ENCODE measurements at regions of chr13 and their contacts with region 1.

Region 1: GRCh38 chr13:24220086-24220703 is 59.7 kb downstream of the SPATA13 start:
- DNase-seq: peak; percentile 49
- H3K4me3 ChIP-seq: no peak overlapping the region
- CTCF ChIP-seq: peak; percentile 63

Region 2: GRCh38 chr13:24005755-24006281 is 214.4 kb before region 1 on chr13:
- CTCF ChIA-PET with region 1: interaction called, 14 read pairs
- POLR2A ChIA-PET with region 1: no interaction called
- DNase-seq: no peak
- H3K4me3 ChIP-seq: no peak overlapping the region
- CTCF ChIP-seq: no peak

Region 3: DNA sequence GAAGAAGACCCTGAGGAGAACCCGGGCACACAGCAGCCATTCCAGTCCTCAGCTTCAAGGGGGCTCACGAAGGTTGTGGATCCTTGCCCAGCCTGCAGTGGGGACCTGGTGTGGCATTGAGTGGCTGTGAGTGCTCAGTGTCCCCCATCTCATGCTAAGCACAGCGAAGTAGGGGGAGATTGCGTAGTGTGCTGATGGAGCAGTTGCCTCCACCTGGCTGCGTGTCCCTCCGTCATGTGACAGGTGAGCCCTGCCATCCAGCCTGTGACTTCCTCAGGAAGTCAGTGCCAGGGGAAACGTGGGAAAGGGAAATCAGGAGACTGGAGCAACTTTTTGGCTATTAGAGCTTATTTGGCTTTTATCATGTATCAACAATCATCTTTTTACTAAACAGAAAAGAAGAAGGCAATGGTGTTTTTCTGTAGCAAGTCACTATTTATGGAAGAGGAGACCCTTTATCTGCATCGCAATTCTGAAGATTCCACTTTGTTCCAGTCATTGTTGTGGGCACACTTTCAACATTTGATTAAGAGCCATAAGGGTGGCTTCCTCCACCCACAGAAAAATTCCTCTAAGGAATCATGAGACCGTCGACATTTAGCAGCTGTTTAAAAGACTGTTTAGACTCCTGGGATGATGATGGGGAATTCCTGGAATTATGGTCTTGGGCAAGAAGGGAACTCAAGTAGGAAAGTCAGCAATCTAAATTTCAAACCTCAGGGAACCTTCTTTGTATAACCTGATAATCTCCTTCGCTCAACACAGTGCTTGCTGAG is 186.5 kb before region 1 on chr13:
- CTCF ChIA-PET with region 1: interaction called, 17 read pairs
- POLR2A ChIA-PET with region 1: interaction called, 4 read pairs
- DNase-seq: peak; percentile 72
- H3K4me3 ChIP-seq: no peak overlapping the region
- CTCF ChIP-seq: no peak

Region 4: GRCh38 chr13:24053519-24054251 is 166.5 kb before region 1 on chr13:
- CTCF ChIA-PET with region 1: interaction called, 54 read pairs
- POLR2A ChIA-PET with region 1: no interaction called
- DNase-seq: no peak
- H3K4me3 ChIP-seq: no peak overlapping the region
- CTCF ChIP-seq: peak; percentile 74